ENCODE measurements at regions of chr4 and their contacts with region 1.

Region 1: DNA sequence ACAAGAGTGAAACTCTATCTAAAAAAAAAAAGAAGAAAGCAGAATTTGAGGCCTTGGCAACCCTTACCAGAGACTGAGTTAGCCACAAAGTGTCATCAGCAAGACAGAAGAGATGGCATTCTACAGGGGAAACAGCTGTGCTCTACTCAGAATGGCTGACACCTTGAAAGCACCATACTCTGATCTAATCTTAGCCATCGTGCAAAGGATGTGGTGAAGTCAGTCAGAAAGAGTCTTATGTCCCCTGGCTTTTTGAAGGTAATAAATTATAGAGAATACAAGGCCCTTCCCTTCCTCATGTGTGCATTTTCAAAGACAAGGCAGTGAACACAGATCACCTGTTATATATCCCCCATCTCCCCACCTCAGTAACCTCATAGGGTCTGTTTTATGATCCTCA is 13.2 kb downstream of the CLNK start:
- DNase-seq: peak; percentile 35 to 77 (median 56)
- H3K4me3 ChIP-seq: no peak overlapping the region
- H3K4me3 Mint-ChIP-seq: peak overlapping the region in 2 of 8 donors; percentile 18 to 23
- H3K27ac ChIP-seq: no peak overlapping the region
- H3K27ac Mint-ChIP-seq: peak overlapping the region; percentile 9 to 92 (median 64)
- H3K4me1 ChIP-seq: peaks cover 23% of the 10 kb centered on the region
- H3K4me1 Mint-ChIP-seq: peaks cover 0 to 14% (median 2%) of the 10 kb centered on the region in 4 donors
- H3K27me3 ChIP-seq: no peaks in the 10 kb centered on the region
- H3K27me3 Mint-ChIP-seq: no peaks in the 10 kb centered on the region

Region 2: GRCh38 chr4:10659251-10659650 is 12.1 kb before region 1 on chr4:
- CTCF ChIA-PET with region 1: interaction called, 10 read pairs
- POLR2A ChIA-PET with region 1: no interaction called
- intact Hi-C with region 1: no loop called
- DNase-seq: no peak
- H3K4me3 ChIP-seq: no peak overlapping the region
- H3K4me3 Mint-ChIP-seq: no peak overlapping the region
- H3K27ac ChIP-seq: no peak overlapping the region
- H3K27ac Mint-ChIP-seq: no peak overlapping the region
- H3K4me1 ChIP-seq: peaks cover 7% of the 10 kb centered on the region
- H3K4me1 Mint-ChIP-seq: peaks cover 11 to 15% (median 12%) of the 10 kb centered on the region in 4 donors
- H3K27me3 ChIP-seq: no peaks in the 10 kb centered on the region
- H3K27me3 Mint-ChIP-seq: peaks cover 0 to 1% of the 10 kb centered on the region in 2 donors

Measured in CD4-positive, alpha-beta memory T cell (primary cell).